Right lobe of liver (tissue), 6 donors: ENCODE measurements at regions of chr14 and their contacts with region 1.

Region 1: DNA sequence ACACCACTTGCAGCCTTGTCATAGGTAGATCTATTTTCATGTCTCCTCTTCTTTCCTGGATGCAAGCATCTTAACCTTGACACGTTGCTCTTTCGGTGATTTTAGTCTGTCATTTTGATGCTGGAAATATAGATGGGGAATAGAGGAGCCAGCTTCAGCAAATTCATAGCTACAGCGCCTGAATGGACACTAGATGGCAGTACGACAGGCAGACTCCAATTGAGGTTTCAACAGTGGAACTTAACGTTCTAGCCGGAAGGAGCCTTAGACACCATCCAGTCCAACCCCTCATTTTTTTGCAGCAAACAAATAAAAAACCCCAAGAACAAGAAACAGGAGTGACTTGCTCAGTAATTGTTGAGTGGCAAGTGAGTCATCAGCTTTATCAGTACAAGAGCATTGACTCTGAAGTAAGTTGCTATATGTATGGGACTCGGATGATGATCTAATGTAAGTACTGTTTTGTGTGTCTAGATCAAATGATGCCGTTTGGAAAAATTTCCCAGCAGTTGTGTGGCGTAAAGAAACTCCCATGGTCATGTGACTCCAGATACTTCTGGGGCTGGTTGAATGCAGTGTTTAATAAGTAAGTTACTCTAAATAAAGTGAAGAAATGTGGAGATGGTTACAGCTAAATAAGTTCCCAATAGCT is 9.0 kb downstream of the DMAC2L start:
- DNase-seq: peak in 1 of 3 donors; percentile 65
- ATAC-seq: peak; percentile 99 to 100 (median 100)
- H3K4me3 ChIP-seq: no peak overlapping the region
- H3K27ac ChIP-seq: peak overlapping the region; percentile 19 to 38 (median 24)
- H3K4me1 ChIP-seq: no peaks in the 10 kb centered on the region
- H3K27me3 ChIP-seq: no peaks in the 10 kb centered on the region
- CTCF ChIP-seq: peak; percentile 80 to 92 (median 88)
- POLR2A ChIP-seq: no peak

Region 2: DNA sequence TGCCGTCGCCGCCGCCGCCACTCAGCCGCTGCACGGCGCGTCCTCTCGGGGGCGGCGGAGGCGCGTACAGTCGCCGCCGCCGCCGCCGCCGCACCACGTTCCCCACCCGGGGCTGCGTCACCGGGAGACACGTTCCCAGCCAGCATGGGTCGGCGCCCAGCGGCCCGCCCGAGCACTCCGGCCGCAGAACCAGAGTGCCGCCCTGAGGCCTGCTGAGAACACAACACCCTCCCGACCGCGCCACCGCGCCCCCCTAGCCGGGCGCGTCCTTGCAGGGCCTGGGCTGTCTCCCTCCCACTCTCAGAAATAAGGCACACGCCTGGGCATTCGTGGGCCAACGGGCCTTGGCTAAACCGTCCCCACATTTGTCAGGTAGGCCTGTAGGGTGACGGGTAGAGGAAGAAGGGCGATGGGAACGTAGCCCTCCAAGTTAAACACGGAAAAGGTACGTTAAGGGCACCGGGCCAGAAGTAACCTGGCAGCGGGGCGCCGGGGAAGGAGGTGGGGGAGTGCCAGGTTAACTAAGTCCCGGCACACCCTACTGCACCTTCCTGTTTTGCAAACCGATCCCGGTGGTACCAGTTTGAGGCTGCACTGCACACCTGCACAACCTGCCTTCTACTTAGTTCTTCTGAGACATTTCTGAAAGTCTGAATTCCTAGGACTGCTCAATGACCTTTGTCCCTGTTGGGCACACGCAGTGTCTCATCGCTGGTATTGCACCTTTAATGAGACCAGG is 211.5 kb after region 1 on chr14 and contains the start of gene MAP4K5:
- intact Hi-C with region 1: loop called (anchors 5 to 10 kb)
- DNase-seq: peak; percentile 92 to 95 (median 94)
- ATAC-seq: peak; percentile 98 to 100 (median 99)
- H3K4me3 ChIP-seq: peak within 1 kb of the TSS; percentile 77 to 90 (median 85)
- H3K27ac ChIP-seq: peak within 1 kb of the TSS; percentile 87 to 94 (median 90)
- H3K4me1 ChIP-seq: peaks cover 0 to 15% (median 6%) of the 10 kb centered on the region in 4 donors
- H3K27me3 ChIP-seq: no peaks in the 10 kb centered on the region
- CTCF ChIP-seq: peak; percentile 83 to 97 (median 92)
- POLR2A ChIP-seq: peak; percentile 72
- total RNA-seq, gene MAP4K5: 6.5 to 31.3 (median 14.4) TPM